ENCODE measurements at regions of chr11 and their contacts with region 1.

Region 1: GRCh38 chr11:102047305-102047924 is at the start of gene CFAP300:
- DNase-seq: peak; percentile 43
- H3K4me3 ChIP-seq: peak within 1 kb of the TSS; percentile 66 to 85 (median 72)
- H3K27ac ChIP-seq: peak within 1 kb of the TSS; percentile 65
- H3K4me1 ChIP-seq: peaks cover 15% of the 10 kb centered on the region
- H3K27me3 ChIP-seq: no peaks in the 10 kb centered on the region
- CTCF ChIP-seq: no peak
- total RNA-seq, gene CFAP300: 4.3 to 6.4 TPM

Region 2: GRCh38 chr11:102244681-102245409 is 197.4 kb after region 1 on chr11:
- CTCF ChIA-PET with region 1: interaction called, 40 read pairs
- dilution Hi-C with region 1: no loop called
- in situ Hi-C with region 1: no loop called
- intact Hi-C with region 1: no loop called
- DNase-seq: peak; percentile 95
- H3K4me3 ChIP-seq: no peak overlapping the region
- H3K27ac ChIP-seq: peak overlapping the region; percentile 74
- H3K4me1 ChIP-seq: peaks cover 20% of the 10 kb centered on the region
- H3K27me3 ChIP-seq: no peaks in the 10 kb centered on the region
- CTCF ChIP-seq: no peak

Measured in mammary epithelial cell (primary cell).